Endothelial cell of umbilical vein (primary cell): ENCODE measurements at regions of chr15 and their contacts with region 1.

Region 1: GRCh38 chr15:90221246-90221900 is 12.4 kb downstream of the CIB1 start:
- DNase-seq: peak; percentile 70
- H3K4me3 ChIP-seq: no peak overlapping the region
- H3K27ac ChIP-seq: no peak overlapping the region
- H3K4me1 ChIP-seq: no peaks in the 10 kb centered on the region
- H3K27me3 ChIP-seq: no peaks in the 10 kb centered on the region
- CTCF ChIP-seq: peak; percentile 64 to 84
- POLR2A ChIP-seq: no peak

Region 2: GRCh38 chr15:89893696-89894455 is 327.5 kb before region 1 on chr15 and contains the start of gene AP3S2:
- CTCF ChIA-PET with region 1: interaction called, 5 read pairs
- POLR2A ChIA-PET with region 1: no interaction called
- dilution Hi-C with region 1: no loop called
- intact Hi-C with region 1: loop called (anchors 10 kb)
- DNase-seq: peak; percentile 92
- H3K4me3 ChIP-seq: peak within 1 kb of the TSS; percentile 77 to 96 (median 86)
- H3K27ac ChIP-seq: peak within 1 kb of the TSS; percentile 69
- H3K4me1 ChIP-seq: peaks cover 5% of the 10 kb centered on the region
- H3K27me3 ChIP-seq: no peaks in the 10 kb centered on the region
- CTCF ChIP-seq: no peak
- POLR2A ChIP-seq: peak; percentile 85
- total RNA-seq, gene AP3S2: 20.4 and 31.1 TPM in 2 replicates

Region 3: GRCh38 chr15:90143166-90143655 is 78.2 kb before region 1 on chr15:
- CTCF ChIA-PET with region 1: interaction called, 38 read pairs
- POLR2A ChIA-PET with region 1: no interaction called
- dilution Hi-C with region 1: loop called (anchors 10 kb)
- intact Hi-C with region 1: loop called (anchors 1 kb)
- DNase-seq: peak; percentile 60
- H3K4me3 ChIP-seq: no peak overlapping the region
- H3K27ac ChIP-seq: no peak overlapping the region
- H3K4me1 ChIP-seq: peaks cover 2% of the 10 kb centered on the region
- H3K27me3 ChIP-seq: no peaks in the 10 kb centered on the region
- CTCF ChIP-seq: peak; percentile 53 to 75
- POLR2A ChIP-seq: no peak

Region 4: GRCh38 chr15:90165659-90166421 is 55.5 kb before region 1 on chr15:
- CTCF ChIA-PET with region 1: interaction called, 22 read pairs
- POLR2A ChIA-PET with region 1: no interaction called
- dilution Hi-C with region 1: no loop called
- intact Hi-C with region 1: no loop called
- DNase-seq: peak; percentile 95
- H3K4me3 ChIP-seq: no peak overlapping the region
- H3K27ac ChIP-seq: peak overlapping the region; percentile 71
- H3K4me1 ChIP-seq: peaks cover 18% of the 10 kb centered on the region
- H3K27me3 ChIP-seq: no peaks in the 10 kb centered on the region
- CTCF ChIP-seq: no peak
- POLR2A ChIP-seq: no peak

Region 5: DNA sequence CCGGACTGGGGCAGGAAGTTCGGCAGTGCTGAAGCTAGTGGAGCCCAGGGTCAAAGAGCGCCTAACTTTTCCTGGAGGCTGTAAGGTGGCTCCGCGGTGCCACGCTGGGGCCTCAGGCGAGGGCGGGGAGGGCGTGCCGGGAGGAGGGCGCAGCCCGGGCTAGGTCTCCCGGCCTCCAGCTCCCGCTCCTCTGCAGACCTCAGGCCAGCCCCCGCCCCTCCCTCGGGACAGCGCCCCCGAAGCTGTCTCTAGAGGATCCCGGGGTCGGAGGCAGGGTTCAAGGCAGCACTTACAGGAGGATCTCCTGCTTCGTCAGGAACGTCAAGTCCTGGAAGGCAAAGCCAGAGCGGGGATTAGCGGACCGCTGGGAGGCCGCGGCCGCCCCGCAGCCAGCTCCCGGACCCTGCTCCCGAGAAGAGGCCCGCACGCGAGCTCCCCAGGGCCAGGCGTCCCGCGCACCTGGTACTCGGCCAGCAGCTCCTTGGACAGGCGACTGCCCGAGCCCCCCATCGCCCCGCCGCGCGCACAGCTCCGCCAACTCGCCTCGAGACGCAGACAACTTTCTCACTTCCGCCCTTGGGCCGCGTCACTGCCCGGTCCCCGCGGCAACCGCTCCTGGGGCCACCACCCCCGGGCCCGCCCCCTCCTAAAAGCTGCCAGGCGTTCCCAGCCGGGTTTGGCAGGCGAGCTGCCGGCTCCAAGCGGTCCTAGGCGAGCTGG is 12.2 kb after region 1 on chr15 and contains the start of gene CIB1:
- CTCF ChIA-PET with region 1: interaction called, 47 read pairs
- POLR2A ChIA-PET with region 1: no interaction called
- dilution Hi-C with region 1: no loop called
- intact Hi-C with region 1: no loop called
- DNase-seq: peak; percentile 98
- H3K4me3 ChIP-seq: peak within 1 kb of the TSS; percentile 77 to 93 (median 82)
- H3K27ac ChIP-seq: peak within 1 kb of the TSS; percentile 69
- H3K4me1 ChIP-seq: peaks cover 18% of the 10 kb centered on the region
- H3K27me3 ChIP-seq: no peaks in the 10 kb centered on the region
- CTCF ChIP-seq: peak in 1 of 2 donors; percentile 34
- POLR2A ChIP-seq: peak; percentile 67
- total RNA-seq, gene CIB1: 58.3 and 61.0 TPM in 2 replicates

Region 6: DNA sequence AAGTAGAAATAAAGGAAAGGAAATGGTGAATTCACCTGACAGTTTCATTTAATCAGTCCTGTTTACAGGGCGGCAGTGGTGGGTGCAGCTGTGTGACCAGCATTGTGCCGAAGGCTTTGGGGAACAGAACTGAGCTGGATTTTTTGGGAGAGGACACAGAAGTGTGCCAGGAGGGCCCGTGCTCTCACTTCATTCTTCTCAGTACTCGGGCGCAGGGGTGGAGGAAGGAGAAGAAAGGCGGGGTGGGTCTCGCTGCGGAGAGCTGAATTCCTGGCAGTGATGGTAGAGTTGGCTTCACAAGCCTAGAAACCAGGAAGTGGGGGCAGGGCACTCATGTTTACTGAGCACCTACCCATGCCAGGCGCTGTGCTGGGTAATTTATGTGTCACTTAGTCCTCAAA is 372.9 kb after region 1 on chr15:
- CTCF ChIA-PET with region 1: no interaction called
- POLR2A ChIA-PET with region 1: no interaction called
- dilution Hi-C with region 1: no loop called
- intact Hi-C with region 1: no loop called
- DNase-seq: peak; percentile 75
- H3K4me3 ChIP-seq: no peak overlapping the region
- H3K27ac ChIP-seq: peak overlapping the region; percentile 5
- H3K4me1 ChIP-seq: peaks cover 13% of the 10 kb centered on the region
- H3K27me3 ChIP-seq: no peaks in the 10 kb centered on the region
- CTCF ChIP-seq: no peak
- POLR2A ChIP-seq: no peak